Activated naive CD4-positive, alpha-beta T cell treated with anti-CD3 and anti-CD28 coated beads, Interleukin-2, amount 10 ng/mL, durations not matched to agents 7 days and 5 days (primary cell): ENCODE measurements at regions of chr22 and their contacts with region 1.

Region 1: GRCh38 chr22:22959147-22959827 is 71.7 kb downstream of the IGLL5 start:
- DNase-seq: peak; percentile 84
- H3K4me3 Mint-ChIP-seq: no peak overlapping the region
- H3K27ac Mint-ChIP-seq: no peak overlapping the region
- H3K4me1 Mint-ChIP-seq: no peaks in the 10 kb centered on the region
- H3K27me3 Mint-ChIP-seq: peaks cover 46% of the 10 kb centered on the region

Region 2: DNA sequence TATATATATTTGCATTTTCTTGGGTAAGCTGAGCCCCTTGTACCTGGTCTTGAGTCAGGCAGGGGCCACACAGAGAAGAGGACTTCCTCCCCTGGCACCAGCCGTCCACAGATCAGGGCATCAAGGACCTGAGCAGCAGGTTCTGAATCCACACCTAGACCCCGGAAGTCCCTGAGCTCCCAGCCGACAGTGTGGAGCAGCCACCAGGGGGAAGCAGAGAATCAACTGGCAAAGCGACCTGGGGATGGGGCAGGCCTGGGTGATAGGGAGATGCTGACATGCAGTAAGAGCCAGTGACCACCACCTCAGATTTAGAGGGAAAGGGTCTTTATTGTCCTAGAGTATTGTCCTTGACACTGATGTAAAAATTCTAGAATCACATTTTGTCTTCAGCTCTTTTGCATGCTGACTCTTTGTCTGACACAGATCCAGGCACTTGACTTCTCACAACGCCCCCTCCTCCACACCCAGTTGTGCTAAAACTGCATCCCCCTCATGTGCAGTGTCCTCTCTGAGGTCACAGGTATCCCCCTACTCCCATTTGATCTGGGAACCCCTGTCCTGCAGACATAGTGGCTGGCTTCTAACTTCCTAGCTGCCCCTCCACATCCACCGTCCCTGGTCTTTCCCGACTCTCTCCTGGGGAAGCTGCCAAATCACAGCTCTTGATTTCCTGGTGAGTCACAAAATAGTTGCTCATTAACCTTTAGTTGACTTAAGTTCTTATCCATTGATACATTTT is 205.6 kb before region 1 on chr22:
- CTCF ChIA-PET with region 1: interaction called, 18 read pairs
- DNase-seq: peak; percentile 87
- H3K4me3 Mint-ChIP-seq: no peak overlapping the region
- H3K27ac Mint-ChIP-seq: no peak overlapping the region
- H3K4me1 Mint-ChIP-seq: peaks cover 7% of the 10 kb centered on the region
- H3K27me3 Mint-ChIP-seq: peaks cover 19% of the 10 kb centered on the region

Region 3: GRCh38 chr22:22787786-22788459 is 171.4 kb before region 1 on chr22:
- CTCF ChIA-PET with region 1: interaction called, 47 read pairs
- DNase-seq: peak; percentile 78
- H3K4me3 Mint-ChIP-seq: no peak overlapping the region
- H3K27ac Mint-ChIP-seq: no peak overlapping the region
- H3K4me1 Mint-ChIP-seq: peaks cover 16% of the 10 kb centered on the region
- H3K27me3 Mint-ChIP-seq: peaks cover 38% of the 10 kb centered on the region

Region 4: DNA sequence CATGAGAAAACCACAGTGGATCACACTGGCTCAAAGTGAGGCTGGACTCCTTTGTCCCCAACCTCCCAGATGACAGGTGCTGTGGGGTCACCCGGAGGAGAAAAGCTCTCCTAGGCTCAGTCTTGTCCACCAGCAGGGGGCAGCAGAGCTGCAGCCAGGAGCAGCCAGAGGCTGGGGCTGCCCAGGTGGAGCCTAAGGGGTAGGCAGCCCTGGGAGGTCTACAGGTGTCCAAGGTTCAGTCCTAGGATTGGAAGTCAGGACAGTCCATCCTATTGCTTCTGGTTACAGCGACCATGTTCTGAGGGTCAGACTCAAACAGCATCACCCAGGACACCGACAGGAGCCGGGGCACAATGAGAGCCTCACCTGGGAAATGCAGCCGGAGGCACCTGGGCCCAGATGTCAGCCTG is 149.3 kb before region 1 on chr22:
- CTCF ChIA-PET with region 1: interaction called, 18 read pairs
- DNase-seq: peak; percentile 85
- H3K4me3 Mint-ChIP-seq: no peak overlapping the region
- H3K27ac Mint-ChIP-seq: no peak overlapping the region
- H3K4me1 Mint-ChIP-seq: peaks cover 23% of the 10 kb centered on the region
- H3K27me3 Mint-ChIP-seq: peaks cover 23% of the 10 kb centered on the region

Region 5: GRCh38 chr22:22884010-22884887 is 75.0 kb before region 1 on chr22:
- CTCF ChIA-PET with region 1: interaction called, 71 read pairs
- DNase-seq: peak; percentile 85
- H3K4me3 Mint-ChIP-seq: no peak overlapping the region
- H3K27ac Mint-ChIP-seq: no peak overlapping the region
- H3K4me1 Mint-ChIP-seq: peaks cover 18% of the 10 kb centered on the region
- H3K27me3 Mint-ChIP-seq: peaks cover 91% of the 10 kb centered on the region

Region 6: DNA sequence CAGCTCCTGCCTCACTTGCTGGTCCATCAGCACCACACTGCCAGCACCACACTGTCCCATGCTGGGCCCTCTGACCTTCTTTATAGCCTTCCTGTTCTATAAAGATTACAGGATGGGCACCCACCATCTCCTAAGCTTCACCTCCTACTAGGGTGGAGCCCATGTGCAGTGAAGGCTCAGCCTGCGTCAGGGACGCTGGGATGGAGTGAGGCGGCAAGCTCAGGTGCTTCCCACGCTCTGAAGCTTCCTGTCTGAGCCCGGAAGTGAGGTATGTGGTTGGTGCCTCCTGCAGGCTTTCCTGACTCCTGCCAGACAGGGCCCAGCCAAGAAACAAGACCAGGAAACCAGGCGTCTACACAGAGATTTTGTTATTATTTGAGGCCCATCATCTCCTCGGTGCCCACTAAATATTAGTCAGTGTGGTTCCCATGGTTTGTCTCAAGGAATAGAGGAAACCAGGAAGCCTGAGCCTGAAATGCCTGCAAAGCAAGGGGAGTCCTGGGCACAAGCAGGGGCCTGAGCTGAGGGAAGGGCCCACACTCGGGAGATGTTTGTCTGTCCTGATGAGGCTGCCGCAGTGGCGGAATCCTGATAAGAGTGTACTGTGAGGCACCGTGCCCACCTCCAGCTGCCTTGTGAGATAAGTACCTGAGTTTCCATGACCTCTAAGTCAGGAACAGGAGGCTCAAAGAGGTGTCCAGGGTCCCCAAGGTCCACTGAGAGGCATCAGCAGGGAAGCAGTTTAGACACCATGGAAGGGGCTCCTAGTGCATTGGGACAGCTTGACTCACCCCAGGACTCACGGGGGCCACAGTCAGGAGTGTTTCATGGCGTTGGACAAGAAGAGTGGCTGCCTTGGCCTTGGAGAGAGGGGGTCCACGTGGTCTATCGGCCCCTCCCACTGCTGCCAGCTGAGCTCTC is 160.5 kb after region 1 on chr22:
- CTCF ChIA-PET with region 1: interaction called, 12 read pairs
- DNase-seq: peak; percentile 66
- H3K4me3 Mint-ChIP-seq: peak overlapping the region; percentile 8
- H3K27ac Mint-ChIP-seq: peak overlapping the region; percentile 74
- H3K4me1 Mint-ChIP-seq: peaks cover 13% of the 10 kb centered on the region
- H3K27me3 Mint-ChIP-seq: no peaks in the 10 kb centered on the region

Region 7: GRCh38 chr22:23256986-23257888 is 297.9 kb after region 1 on chr22:
- CTCF ChIA-PET with region 1: no interaction called
- DNase-seq: no peak
- H3K4me3 Mint-ChIP-seq: no peak overlapping the region
- H3K27ac Mint-ChIP-seq: no peak overlapping the region
- H3K4me1 Mint-ChIP-seq: no peaks in the 10 kb centered on the region
- H3K27me3 Mint-ChIP-seq: no peaks in the 10 kb centered on the region

Region 8: DNA sequence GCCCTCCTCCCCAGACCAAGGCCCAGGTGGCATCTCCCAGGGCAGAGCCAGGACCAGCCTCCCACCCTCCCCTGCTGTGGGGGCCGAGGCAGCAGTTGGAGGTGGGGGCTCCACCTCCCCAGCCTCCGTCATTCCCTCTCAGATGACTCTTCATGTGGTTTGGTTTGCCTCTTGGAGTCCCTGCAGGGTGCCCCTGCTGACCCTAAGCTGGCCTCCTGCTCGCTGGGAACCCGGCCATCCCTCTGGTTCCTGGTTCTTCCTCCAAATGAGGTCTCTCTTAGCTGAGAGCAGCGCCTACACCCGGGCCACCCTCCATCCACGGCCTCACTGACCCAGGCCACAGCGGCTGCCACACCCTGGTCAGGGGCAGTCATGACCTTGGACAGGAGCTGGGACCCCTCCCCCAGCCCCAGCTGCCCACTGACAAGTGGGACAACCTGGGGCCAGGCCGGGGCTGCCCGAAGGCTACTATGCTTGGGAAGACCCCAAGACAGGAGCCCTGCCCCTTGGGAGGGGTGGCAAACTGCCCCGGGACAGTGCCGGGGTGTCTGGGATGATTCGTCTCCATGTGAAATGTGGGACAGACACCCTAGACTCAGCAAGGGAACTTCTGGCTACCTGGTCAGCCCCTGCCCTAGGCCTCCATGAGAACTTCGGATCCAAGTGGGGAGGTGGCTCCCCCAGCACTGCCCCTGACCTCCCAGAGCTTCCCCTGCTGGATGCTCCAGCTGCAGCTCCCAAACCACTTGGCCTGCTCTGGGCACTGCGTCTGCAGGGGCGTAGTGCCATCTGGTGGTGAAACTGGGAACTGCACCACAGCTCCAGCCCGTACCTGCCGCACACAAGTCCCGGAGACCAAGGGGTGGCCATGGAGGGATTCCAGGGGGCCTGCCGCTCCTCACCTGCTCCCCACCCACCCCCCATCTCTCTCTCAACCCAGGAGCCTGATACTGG is 426.3 kb after region 1 on chr22:
- CTCF ChIA-PET with region 1: interaction called, 11 read pairs
- DNase-seq: peak; percentile 88
- H3K4me3 Mint-ChIP-seq: no peak overlapping the region
- H3K27ac Mint-ChIP-seq: peak overlapping the region; percentile 45
- H3K4me1 Mint-ChIP-seq: no peaks in the 10 kb centered on the region
- H3K27me3 Mint-ChIP-seq: peaks cover 11% of the 10 kb centered on the region